ENCODE measurements at regions of chr1 and their contacts with region 1.

Region 1: DNA sequence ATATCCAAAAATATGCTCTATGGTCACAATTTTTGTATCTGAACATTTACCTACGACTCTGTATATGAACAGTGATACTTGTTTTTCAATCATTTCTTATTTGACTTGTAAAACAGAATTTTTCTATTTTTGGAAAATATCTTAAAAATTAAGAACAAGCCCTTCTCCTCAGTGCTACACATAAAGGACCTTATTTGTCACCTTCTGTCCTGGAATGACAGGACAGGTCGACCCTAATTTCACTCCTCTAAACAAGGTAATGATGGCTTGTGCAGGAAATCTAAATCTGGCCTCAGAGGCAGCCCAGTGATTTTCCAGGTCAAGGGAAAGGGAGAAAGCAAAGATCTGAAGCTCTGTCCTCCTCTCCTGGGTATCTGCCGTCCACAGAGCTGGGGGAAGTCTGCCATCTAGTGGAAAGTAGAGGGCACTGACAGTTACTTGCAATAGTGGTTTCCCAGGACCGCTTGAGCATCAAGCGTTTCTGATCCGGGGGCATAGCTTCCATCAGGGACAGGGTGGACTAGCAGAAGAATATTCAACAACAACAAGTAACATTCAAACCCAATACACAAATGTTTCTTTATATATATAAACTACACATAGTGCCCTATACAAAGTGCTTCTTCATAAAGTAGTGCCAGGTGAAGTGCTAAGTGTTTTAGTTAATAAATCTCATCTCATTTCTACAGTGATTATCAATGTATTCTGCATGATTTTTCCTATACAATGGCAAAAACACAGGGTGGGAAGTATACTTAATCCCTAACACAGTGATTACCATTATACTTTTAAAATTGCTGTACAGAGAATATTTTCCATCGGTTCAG is 74.6 kb downstream of the SLC25A24 start:
- DNase-seq: peak; percentile 29
- H3K4me3 ChIP-seq: no peak overlapping the region
- CTCF ChIP-seq: peak; percentile 89

Region 2: GRCh38 chr1:107739228-107739627 is 386.3 kb before region 1 on chr1:
- CTCF ChIA-PET with region 1: no interaction called
- POLR2A ChIA-PET with region 1: no interaction called
- DNase-seq: no peak
- H3K4me3 ChIP-seq: no peak overlapping the region
- CTCF ChIP-seq: no peak

Region 3: GRCh38 chr1:107788206-107789202 is 337.0 kb before region 1 on chr1:
- CTCF ChIA-PET with region 1: interaction called, 422 read pairs
- POLR2A ChIA-PET with region 1: no interaction called
- DNase-seq: no peak
- H3K4me3 ChIP-seq: no peak overlapping the region
- CTCF ChIP-seq: no peak

Region 4: DNA sequence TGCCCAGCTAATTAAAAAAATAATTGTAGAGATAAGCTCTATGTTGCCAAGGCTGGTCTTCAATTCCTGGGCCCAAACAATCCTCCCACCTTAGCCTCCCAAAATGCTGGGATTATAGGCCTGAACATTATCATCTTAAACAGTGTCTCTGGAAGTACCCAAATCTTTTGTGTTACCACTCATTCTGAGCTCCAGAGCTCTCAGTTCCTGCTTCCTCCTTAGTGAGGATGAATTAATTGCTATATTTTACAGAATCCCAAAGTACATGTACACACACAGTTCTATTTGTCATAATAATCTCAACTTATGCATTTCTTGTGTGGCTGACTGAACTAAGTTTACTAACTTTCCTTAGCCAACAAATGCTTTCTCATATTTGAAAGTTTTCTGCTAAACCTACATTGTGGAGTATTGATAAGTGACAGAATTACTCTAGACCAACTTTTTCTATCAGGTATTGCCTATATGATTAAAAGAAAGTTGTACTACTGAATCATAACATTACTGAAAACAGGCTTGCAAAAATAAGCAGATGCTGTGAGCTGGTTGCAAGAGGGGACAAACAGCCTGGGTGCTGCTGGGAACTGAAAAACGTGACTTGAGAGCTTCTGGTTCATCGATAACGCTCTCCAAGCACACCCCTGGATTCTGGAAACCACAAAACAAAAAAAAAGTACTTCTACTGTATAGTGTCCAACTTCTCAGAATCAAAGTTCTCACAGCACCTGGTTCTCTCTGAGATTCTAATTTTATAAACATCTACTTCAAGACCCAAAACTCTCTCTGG is 175.9 kb before region 1 on chr1:
- CTCF ChIA-PET with region 1: no interaction called
- POLR2A ChIA-PET with region 1: no interaction called
- DNase-seq: no peak
- H3K4me3 ChIP-seq: no peak overlapping the region
- CTCF ChIP-seq: no peak

Region 5: DNA sequence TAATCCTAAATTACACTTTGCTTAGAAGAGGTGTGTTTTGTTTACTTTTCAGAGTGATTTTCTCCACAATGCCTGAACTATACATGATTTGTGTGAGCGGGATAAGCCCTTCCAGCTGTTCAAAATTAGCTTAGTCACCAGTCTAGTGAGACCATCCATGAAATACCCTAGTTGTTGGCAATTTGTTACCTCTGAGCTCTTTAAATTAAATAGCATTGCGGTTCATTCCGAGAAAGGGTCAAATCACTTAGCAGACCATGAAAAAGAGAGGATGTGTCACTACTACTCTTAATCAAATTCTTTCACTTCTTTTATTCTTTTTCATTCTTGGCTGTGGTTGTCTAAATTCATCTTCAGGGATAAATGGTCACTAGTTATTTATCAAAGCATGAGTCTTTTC is 148.7 kb before region 1 on chr1:
- CTCF ChIA-PET with region 1: no interaction called
- POLR2A ChIA-PET with region 1: no interaction called
- DNase-seq: no peak
- H3K4me3 ChIP-seq: no peak overlapping the region
- CTCF ChIP-seq: no peak

Region 6: GRCh38 chr1:108089477-108089876 is 36.0 kb before region 1 on chr1:
- CTCF ChIA-PET with region 1: no interaction called
- POLR2A ChIA-PET with region 1: no interaction called
- DNase-seq: no peak
- H3K4me3 ChIP-seq: no peak overlapping the region
- CTCF ChIP-seq: no peak

Region 7: GRCh38 chr1:108141621-108142020 is 16.1 kb after region 1 on chr1:
- CTCF ChIA-PET with region 1: interaction called, 45 read pairs
- POLR2A ChIA-PET with region 1: no interaction called
- DNase-seq: no peak
- H3K4me3 ChIP-seq: no peak overlapping the region
- CTCF ChIP-seq: no peak

Measured in AG04449 (cell line).